SK-N-SH (cell line): ENCODE measurements at regions of chr14 and their contacts with region 1.

Region 1: GRCh38 chr14:90697577-90698206 is 118.5 kb downstream of the TTC7B start:
- DNase-seq: peak; percentile 80
- H3K4me3 ChIP-seq: peak overlapping the region in 1 of 2 experiments; percentile 48; a peak in 1 of 4 replicates
- H3K27ac ChIP-seq: peak overlapping the region in 1 of 2 experiments; percentile 65; a peak in 3 of 4 replicates
- H3K4me1 ChIP-seq: peaks cover 21 to 28% of the 10 kb centered on the region in 2 experiments; a peak in 3 of 4 replicates
- H3K27me3 ChIP-seq: no peaks in the 10 kb centered on the region
- CTCF ChIP-seq: peak; percentile 96
- EP300 ChIP-seq: no peak
- RAD21 ChIP-seq: peak; percentile 97

Region 2: GRCh38 chr14:90383075-90383730 is 314.5 kb before region 1 on chr14:
- CTCF ChIA-PET with region 1: interaction called, 18 read pairs
- POLR2A ChIA-PET with region 1: interaction called, 3 read pairs
- DNase-seq: peak; percentile 95
- H3K4me3 ChIP-seq: peak overlapping the region; percentile 70 to 80
- H3K27ac ChIP-seq: peak overlapping the region; percentile 96 to 99
- H3K4me1 ChIP-seq: peaks cover 16 to 23% of the 10 kb centered on the region in 2 experiments; a peak in 2 of 4 replicates
- H3K27me3 ChIP-seq: no peaks in the 10 kb centered on the region
- CTCF ChIP-seq: no peak
- EP300 ChIP-seq: peak; percentile 5 to 46; a peak in 2 of 4 replicates
- RAD21 ChIP-seq: no peak

Region 3: DNA sequence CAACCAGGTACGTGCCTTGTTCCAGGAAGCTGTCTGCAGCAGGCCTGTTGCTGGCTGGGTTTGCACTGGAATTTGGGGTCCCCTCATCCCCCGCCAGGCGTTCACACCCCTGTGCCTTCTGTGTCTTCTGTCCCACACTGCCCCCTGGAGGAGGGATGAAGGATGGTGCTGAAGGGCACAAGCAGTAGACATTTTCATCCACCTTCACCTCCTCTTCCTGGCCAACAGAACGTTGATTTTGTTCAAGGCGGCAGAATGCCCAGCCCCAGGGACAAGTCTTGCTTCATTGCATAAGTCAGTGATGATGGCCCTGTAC is 178.8 kb before region 1 on chr14:
- CTCF ChIA-PET with region 1: interaction called, 10 read pairs
- POLR2A ChIA-PET with region 1: interaction called, 4 read pairs
- DNase-seq: no peak
- H3K4me3 ChIP-seq: no peak overlapping the region
- H3K27ac ChIP-seq: no peak overlapping the region
- H3K4me1 ChIP-seq: peaks cover 20 to 41% of the 10 kb centered on the region in 2 experiments; a peak in 3 of 4 replicates
- H3K27me3 ChIP-seq: no peaks in the 10 kb centered on the region
- CTCF ChIP-seq: peak; percentile 58
- EP300 ChIP-seq: no peak
- RAD21 ChIP-seq: peak; percentile 66

Region 4: DNA sequence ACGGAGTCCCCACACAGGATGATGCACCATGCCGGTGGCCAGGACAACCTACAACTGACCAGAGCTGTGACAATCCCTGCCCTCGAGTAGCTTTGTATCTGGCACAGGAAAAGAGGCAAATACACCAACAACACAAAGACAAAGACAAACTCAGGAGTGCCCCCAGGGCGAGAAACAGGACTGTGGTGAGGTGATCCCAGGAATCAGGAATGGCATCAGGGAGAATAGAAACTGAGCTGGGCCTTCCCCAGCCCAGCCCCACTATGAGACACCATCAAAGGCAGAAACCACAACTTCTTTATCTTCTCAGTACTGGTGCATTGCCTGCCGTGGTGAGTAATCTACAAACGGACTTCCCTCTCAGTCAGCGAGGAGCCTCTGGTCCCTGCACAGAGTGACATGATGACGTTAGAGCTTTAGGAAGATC is 39.1 kb before region 1 on chr14:
- CTCF ChIA-PET with region 1: interaction called, 11 read pairs
- POLR2A ChIA-PET with region 1: no interaction called
- DNase-seq: no peak
- H3K4me3 ChIP-seq: no peak overlapping the region
- H3K27ac ChIP-seq: peak overlapping the region in 1 of 2 experiments; percentile 48; a peak in 2 of 4 replicates
- H3K4me1 ChIP-seq: peaks cover 6 to 21% of the 10 kb centered on the region in 2 experiments
- H3K27me3 ChIP-seq: no peaks in the 10 kb centered on the region
- CTCF ChIP-seq: no peak
- EP300 ChIP-seq: peak in 1 of 2 experiments; percentile 21; a peak in 1 of 4 replicates
- RAD21 ChIP-seq: no peak

Region 5: DNA sequence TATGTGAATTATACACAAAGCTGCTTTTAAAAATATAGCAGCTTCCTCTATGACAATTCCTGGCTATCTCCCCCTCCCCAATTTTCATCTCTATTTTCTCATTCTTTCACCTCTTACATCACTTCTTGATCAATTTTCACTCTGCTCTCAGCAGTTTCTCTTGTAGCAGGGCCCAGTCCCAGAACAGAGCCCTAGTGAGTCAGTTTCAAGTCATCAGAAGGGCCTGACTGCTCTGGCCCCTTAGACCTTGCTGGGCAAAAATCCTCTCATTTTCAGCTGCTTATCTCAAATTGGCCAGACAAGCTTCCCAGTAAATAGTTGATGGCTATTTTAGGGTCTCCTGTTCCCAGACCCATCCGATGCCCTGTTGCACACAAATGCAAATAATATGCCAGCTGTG is 17.1 kb after region 1 on chr14:
- CTCF ChIA-PET with region 1: interaction called, 38 read pairs
- POLR2A ChIA-PET with region 1: interaction called, 4 read pairs
- DNase-seq: no peak
- H3K4me3 ChIP-seq: no peak overlapping the region
- H3K27ac ChIP-seq: no peak overlapping the region
- H3K4me1 ChIP-seq: peaks cover 3 to 12% of the 10 kb centered on the region in 2 experiments; a peak in 2 of 4 replicates
- H3K27me3 ChIP-seq: no peaks in the 10 kb centered on the region
- CTCF ChIP-seq: no peak
- EP300 ChIP-seq: no peak
- RAD21 ChIP-seq: no peak